Activated CD4-positive, alpha-beta T cell treated with anti-CD3 and anti-CD28 coated beads for 36 hours (primary cell): ENCODE measurements at regions of chr17 and their contacts with region 1.

Region 1: GRCh38 chr17:21318439-21318838 is 33.9 kb downstream of the MAP2K3 start:
- DNase-seq: no peak
- ATAC-seq: no peak
- H3K4me3 Mint-ChIP-seq: no peak overlapping the region
- H3K27ac Mint-ChIP-seq: no peak overlapping the region
- H3K4me1 Mint-ChIP-seq: peaks cover 7% of the 10 kb centered on the region
- H3K27me3 Mint-ChIP-seq: no peaks in the 10 kb centered on the region

Region 2: DNA sequence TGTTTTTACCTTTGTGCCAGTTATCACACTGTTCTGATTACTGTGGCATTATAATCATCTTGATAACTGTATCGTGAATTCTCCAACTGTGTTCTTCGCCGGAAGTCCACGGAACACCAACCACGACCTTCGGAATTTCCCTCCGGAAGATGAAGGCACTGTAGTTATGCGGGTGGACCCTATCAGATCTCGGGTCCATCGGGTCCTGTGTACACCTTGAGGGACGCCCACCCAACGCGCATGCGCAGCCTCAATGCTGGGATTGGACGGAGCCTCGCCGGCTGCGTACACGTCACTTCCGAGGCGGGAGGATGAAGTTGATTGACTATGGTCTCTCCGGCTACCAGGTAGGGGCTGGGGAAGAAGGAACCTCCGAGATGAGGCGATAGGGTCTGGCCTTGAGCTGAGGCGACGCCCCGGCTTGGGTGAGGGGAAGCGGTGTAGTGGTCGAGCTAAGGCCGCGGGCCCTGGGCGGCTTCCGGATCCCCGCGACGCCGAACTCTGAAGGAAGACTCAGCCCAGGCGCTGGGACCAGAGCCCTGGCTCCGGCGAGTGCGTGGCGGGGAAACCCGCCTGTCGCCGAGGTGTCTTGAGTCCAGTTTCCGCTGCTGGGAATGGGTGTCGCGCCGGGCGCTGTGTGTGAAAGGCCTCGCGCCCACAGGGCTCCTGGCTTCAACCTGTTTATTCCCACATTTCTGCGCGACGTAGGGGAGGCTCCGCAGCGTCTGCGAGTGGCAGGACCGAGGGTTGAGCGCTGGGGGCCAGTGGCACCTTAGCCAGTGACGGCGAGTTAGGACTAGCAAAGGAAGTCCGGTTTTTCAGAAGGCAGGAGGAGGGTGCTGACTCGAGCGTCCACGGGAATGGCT is 191.6 kb before region 1 on chr17 and contains the start of gene DHRS7B:
- CTCF ChIA-PET with region 1: no interaction called
- POLR2A ChIA-PET with region 1: no interaction called
- intact Hi-C with region 1: loop called in 1 of 2 experiments (anchors 2 kb)
- DNase-seq: peak; percentile 98
- ATAC-seq: peak; percentile 96
- H3K4me3 Mint-ChIP-seq: peak within 1 kb of the TSS; percentile 91
- H3K27ac Mint-ChIP-seq: peak within 1 kb of the TSS; percentile 98
- H3K4me1 Mint-ChIP-seq: peaks cover 23% of the 10 kb centered on the region
- H3K27me3 Mint-ChIP-seq: no peaks in the 10 kb centered on the region
- total RNA-seq, gene DHRS7B: 12.8 to 15.0 TPM

Region 3: GRCh38 chr17:21284319-21285163 is 33.9 kb before region 1 on chr17 and contains the start of gene MAP2K3:
- CTCF ChIA-PET with region 1: no interaction called
- POLR2A ChIA-PET with region 1: no interaction called
- intact Hi-C with region 1: loop called (anchors 2 kb)
- DNase-seq: peak; percentile 99
- ATAC-seq: peak; percentile 76
- H3K4me3 Mint-ChIP-seq: peak within 1 kb of the TSS; percentile 98
- H3K27ac Mint-ChIP-seq: peak within 1 kb of the TSS; percentile 94
- H3K4me1 Mint-ChIP-seq: peaks cover 57% of the 10 kb centered on the region
- H3K27me3 Mint-ChIP-seq: no peaks in the 10 kb centered on the region
- total RNA-seq, gene MAP2K3: 122 to 123 TPM

Region 4: GRCh38 chr17:21457051-21458026 is 138.9 kb after region 1 on chr17:
- CTCF ChIA-PET with region 1: no interaction called
- POLR2A ChIA-PET with region 1: no interaction called
- intact Hi-C with region 1: loop called in 1 of 2 experiments (anchors 2 kb)
- DNase-seq: peak; percentile 96
- ATAC-seq: peak; percentile 92
- H3K4me3 Mint-ChIP-seq: no peak overlapping the region
- H3K27ac Mint-ChIP-seq: peak overlapping the region; percentile 67
- H3K4me1 Mint-ChIP-seq: peaks cover 21% of the 10 kb centered on the region
- H3K27me3 Mint-ChIP-seq: peaks cover 15% of the 10 kb centered on the region

Region 5: DNA sequence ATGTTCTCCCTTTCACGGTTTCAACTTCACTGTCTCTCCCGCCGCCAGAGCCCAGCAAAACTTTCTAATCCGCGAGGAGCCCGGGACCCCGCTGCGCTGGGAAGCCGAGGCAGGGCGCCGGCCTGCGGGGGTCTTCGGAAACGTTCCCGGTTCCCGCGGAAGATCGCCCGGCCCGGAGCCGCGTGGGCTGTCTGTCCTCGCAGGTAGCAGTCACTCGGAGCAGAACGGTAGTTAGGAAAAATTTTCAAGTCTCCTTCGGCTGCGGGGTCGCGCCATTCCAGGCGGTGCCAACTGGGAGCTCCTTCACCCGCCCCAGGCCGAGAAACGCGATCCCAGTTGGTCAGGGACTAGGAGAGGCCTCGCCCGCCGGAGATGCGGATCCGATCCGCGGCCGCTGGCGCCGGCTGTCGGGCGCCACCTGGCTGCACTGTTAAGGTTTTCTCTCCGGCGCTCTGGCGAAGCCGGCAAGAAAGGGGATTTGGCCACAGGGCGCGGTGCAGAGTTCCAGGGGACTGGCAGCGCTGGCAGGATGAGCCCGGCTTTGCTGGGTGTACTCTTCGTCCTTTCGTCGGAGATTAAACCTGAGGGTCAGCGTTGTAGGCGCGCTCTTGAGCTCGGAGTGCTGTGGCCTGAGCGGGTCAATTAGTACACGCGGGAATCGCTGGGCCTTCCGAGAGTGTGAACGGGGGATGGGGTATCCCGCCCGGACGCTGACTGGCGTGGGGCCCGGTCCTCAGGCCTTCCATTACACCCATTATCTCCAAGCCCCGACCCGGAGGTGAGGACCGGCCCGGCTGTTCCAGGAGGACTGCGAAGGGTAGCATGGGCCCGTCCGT is 193.1 kb after region 1 on chr17:
- CTCF ChIA-PET with region 1: no interaction called
- POLR2A ChIA-PET with region 1: no interaction called
- intact Hi-C with region 1: loop called (anchors 2 to 5 kb)
- DNase-seq: peak; percentile 82
- ATAC-seq: peak; percentile 87
- H3K4me3 Mint-ChIP-seq: peak overlapping the region; percentile 60
- H3K27ac Mint-ChIP-seq: no peak overlapping the region
- H3K4me1 Mint-ChIP-seq: peaks cover 14% of the 10 kb centered on the region
- H3K27me3 Mint-ChIP-seq: peaks cover 31% of the 10 kb centered on the region

Region 6: GRCh38 chr17:21545064-21545463 is 226.6 kb after region 1 on chr17:
- CTCF ChIA-PET with region 1: no interaction called
- POLR2A ChIA-PET with region 1: no interaction called
- intact Hi-C with region 1: no loop called
- DNase-seq: no peak
- ATAC-seq: no peak
- H3K4me3 Mint-ChIP-seq: no peak overlapping the region
- H3K27ac Mint-ChIP-seq: no peak overlapping the region
- H3K4me1 Mint-ChIP-seq: peaks cover 24% of the 10 kb centered on the region
- H3K27me3 Mint-ChIP-seq: no peaks in the 10 kb centered on the region

Region 7: GRCh38 chr17:21772321-21772720 is 453.9 kb after region 1 on chr17:
- CTCF ChIA-PET with region 1: no interaction called
- POLR2A ChIA-PET with region 1: no interaction called
- intact Hi-C with region 1: loop called in 1 of 2 experiments (anchors 5 kb)
- DNase-seq: no peak
- ATAC-seq: no peak
- H3K4me3 Mint-ChIP-seq: no peak overlapping the region
- H3K27ac Mint-ChIP-seq: no peak overlapping the region
- H3K4me1 Mint-ChIP-seq: no peaks in the 10 kb centered on the region
- H3K27me3 Mint-ChIP-seq: no peaks in the 10 kb centered on the region